ENCODE measurements at regions of chr9 and their contacts with region 1.

Region 1: DNA sequence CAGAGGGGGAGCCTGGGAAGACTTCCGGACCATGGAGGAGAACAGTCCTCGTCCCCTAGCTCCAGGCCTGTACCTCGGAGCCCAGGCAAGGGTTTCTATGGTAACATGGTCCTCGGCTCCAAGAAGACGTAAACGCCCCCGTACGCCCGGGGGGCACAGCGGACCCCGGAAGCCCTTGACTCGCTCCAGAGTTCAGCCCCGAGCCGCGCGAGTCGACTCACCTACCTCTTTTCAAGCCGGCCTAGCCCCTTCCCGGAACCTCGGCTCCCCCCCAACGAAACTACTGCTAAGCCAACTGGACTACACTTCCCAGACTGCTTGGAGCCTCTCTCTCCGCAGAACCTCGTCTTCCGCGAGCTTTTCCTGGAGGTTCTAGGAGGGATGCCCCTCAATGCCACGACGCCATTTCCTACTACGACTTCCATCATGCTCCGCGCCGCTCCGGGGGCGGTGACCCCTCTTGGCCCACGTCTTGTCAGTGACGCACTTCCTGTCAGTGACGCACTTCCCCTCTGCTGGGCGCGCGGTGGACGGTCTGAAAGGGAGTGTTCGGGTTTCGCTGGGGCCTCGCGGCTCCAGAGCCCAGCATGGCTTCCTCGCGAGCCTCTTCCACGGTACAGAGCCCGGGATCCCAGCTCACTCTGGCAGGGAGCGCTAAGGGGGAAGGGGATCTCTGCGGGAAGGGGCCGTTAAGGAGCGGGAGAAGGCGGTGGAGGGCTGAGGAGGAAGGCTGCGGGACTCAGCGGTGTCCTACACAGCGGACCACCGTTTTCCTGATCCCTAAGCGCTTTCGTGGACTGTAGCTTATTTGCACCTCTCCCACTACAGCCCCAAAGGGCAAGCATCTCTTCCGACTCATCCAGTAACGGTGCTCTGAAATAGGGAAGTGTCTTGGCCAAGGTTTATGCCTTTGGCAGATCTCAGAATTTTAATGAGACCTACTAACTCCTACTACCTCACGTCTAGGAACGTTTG is at the starts of genes CDC26 and PRPF4:
- DNase-seq: peak; percentile 81 to 98 (median 94)
- ATAC-seq: peak; percentile 94 to 96 (median 95)
- H3K4me3 ChIP-seq: peak within 1 kb of the TSS; percentile 76 to 84
- H3K4me3 Mint-ChIP-seq: no peak within 1 kb of the TSS
- H3K27ac ChIP-seq: peak within 1 kb of the TSS; percentile 89
- H3K27ac Mint-ChIP-seq: no peak within 1 kb of the TSS
- H3K4me1 ChIP-seq: peaks cover 8 to 9% of the 10 kb centered on the region in 2 experiments
- H3K4me1 Mint-ChIP-seq: peaks cover 8 to 42% (median 32%) of the 10 kb centered on the region in 3 donors
- H3K27me3 ChIP-seq: no peaks in the 10 kb centered on the region
- H3K27me3 Mint-ChIP-seq: no peaks in the 10 kb centered on the region
- total RNA-seq, gene CDC26: 25.1 to 37.0 (median 34.7) TPM
- total RNA-seq, gene PRPF4: 16.6 to 24.4 (median 21.1) TPM

Region 2: DNA sequence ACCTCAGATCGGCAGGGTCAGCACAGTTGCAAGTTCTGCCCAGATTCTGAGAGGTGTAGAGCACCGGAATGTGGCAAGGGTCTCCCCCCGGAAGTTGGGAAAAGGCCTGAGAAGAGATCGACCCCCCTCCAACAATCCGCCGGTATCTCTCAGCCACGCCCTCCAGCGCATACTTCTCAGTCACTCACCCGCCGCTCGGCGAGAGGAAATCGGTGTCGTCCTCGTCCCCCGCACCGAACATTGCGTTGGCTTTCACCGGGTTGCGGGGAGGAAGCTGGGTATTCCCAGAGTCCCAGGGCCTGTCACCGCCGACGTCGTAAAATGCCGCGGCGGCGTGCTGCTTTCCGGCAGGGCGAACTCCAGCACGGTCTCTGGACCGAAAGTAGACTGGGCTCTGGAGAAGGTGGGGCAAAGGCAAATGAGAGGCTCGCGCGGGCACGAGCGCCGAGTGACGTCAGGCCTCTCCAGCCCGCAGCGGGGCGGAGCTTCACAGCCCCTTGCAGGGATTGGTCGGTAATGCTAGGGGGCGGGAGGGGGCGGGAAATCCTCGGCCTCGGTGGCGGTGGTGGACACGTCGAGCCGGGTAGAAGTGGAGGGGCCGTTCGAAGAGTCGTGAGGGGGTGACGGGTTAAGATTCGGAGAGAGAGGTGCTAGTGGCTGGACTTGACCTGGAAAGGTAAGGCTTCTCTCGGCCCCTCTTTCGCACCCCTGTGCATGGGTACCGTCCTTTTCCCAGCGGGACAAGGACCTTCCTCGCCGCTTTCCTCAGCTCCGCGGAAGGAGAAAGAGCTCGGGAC is 54.2 kb before region 1 on chr9 and contains the starts of genes FKBP15 and SLC31A1:
- CTCF ChIA-PET with region 1: interaction called, 7 to 31 read pairs
- POLR2A ChIA-PET with region 1: interaction called, 3 to 4 read pairs
- DNase-seq: peak; percentile 87 to 99 (median 94)
- ATAC-seq: peak; percentile 98 to 100 (median 100)
- H3K4me3 ChIP-seq: peak within 1 kb of the TSS; percentile 95 to 99
- H3K4me3 Mint-ChIP-seq: peak within 1 kb of the TSS; percentile 88 to 98 (median 94)
- H3K27ac ChIP-seq: peak within 1 kb of the TSS; percentile 82
- H3K27ac Mint-ChIP-seq: peak within 1 kb of the TSS; percentile 82 to 91
- H3K4me1 ChIP-seq: peaks cover 21 to 23% of the 10 kb centered on the region in 2 experiments
- H3K4me1 Mint-ChIP-seq: peaks cover 50 to 51% (median 50%) of the 10 kb centered on the region in 3 donors
- H3K27me3 ChIP-seq: no peaks in the 10 kb centered on the region
- H3K27me3 Mint-ChIP-seq: no peaks in the 10 kb centered on the region
- total RNA-seq, gene FKBP15: 22.2 to 31.8 (median 29.5) TPM
- total RNA-seq, gene SLC31A1: 2.7 to 7.1 (median 4.2) TPM

Region 3: GRCh38 chr9:113401027-113401792 is 125.8 kb after region 1 on chr9 and contains the start of gene ALAD:
- CTCF ChIA-PET with region 1: interaction called, 4 to 15 read pairs
- POLR2A ChIA-PET with region 1: interaction called in 1 of 2 experiments, 10 read pairs
- DNase-seq: peak; percentile 97 to 100 (median 99)
- ATAC-seq: peak; percentile 98 to 100 (median 99)
- H3K4me3 ChIP-seq: peak within 1 kb of the TSS; percentile 89 to 96
- H3K4me3 Mint-ChIP-seq: peak within 1 kb of the TSS; percentile 90 to 92 (median 91)
- H3K27ac ChIP-seq: peak within 1 kb of the TSS; percentile 28
- H3K27ac Mint-ChIP-seq: peak within 1 kb of the TSS; percentile 66 to 87
- H3K4me1 ChIP-seq: peaks cover 7 to 25% of the 10 kb centered on the region in 2 experiments
- H3K4me1 Mint-ChIP-seq: peaks cover 23 to 36% (median 35%) of the 10 kb centered on the region in 3 donors
- H3K27me3 ChIP-seq: no peaks in the 10 kb centered on the region
- H3K27me3 Mint-ChIP-seq: no peaks in the 10 kb centered on the region
- total RNA-seq, gene ALAD: 23.4 to 40.8 (median 35.2) TPM

Region 4: GRCh38 chr9:113410207-113410864 is 134.9 kb after region 1 on chr9 and contains the starts of genes C9orf43 and POLE3:
- CTCF ChIA-PET with region 1: interaction called, 6 to 22 read pairs
- POLR2A ChIA-PET with region 1: no interaction called
- DNase-seq: peak; percentile 87 to 97 (median 93)
- ATAC-seq: peak; percentile 89 to 95 (median 92)
- H3K4me3 ChIP-seq: peak within 1 kb of the TSS; percentile 62 to 77
- H3K4me3 Mint-ChIP-seq: peak within 1 kb of the TSS; percentile 97 to 99 (median 99)
- H3K27ac ChIP-seq: peak within 1 kb of the TSS; percentile 93
- H3K27ac Mint-ChIP-seq: peak within 1 kb of the TSS; percentile 99 to 100
- H3K4me1 ChIP-seq: peaks cover 7 to 24% of the 10 kb centered on the region in 2 experiments
- H3K4me1 Mint-ChIP-seq: peaks cover 33 to 37% (median 35%) of the 10 kb centered on the region in 3 donors
- H3K27me3 ChIP-seq: no peaks in the 10 kb centered on the region
- H3K27me3 Mint-ChIP-seq: peaks cover 0 to 2% of the 10 kb centered on the region in 2 donors
- total RNA-seq, gene C9orf43: 0.28 to 1.1 (median 0.82) TPM
- total RNA-seq, gene POLE3: 47.2 to 59.1 (median 50.6) TPM

Region 5: DNA sequence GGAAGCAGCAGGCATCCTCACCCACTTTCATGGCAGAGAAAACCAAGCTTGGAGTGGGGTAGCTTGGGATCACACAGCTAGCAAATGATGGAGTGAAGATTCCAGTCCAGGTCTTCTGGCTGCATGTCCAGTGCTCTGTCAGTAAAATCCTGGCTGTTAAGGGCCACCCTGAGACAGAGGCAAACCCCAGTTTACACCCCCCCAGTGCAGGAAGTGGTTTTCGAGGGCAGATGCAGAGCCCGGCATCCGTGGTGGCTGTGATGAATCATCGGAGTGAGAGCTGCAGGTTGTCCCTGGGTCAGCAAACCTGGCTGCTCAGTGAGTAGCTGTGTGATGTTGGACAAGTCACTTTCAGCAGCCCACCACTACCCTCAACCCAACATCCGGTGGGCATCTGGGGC is 303.4 kb after region 1 on chr9:
- CTCF ChIA-PET with region 1: interaction called, 3 to 12 read pairs
- POLR2A ChIA-PET with region 1: no interaction called
- DNase-seq: peak; percentile 52 to 87 (median 74)
- ATAC-seq: peak; percentile 67 to 78 (median 74)
- H3K4me3 ChIP-seq: peak overlapping the region; percentile 10 to 17
- H3K4me3 Mint-ChIP-seq: peak overlapping the region; percentile 52 to 81 (median 62)
- H3K27ac ChIP-seq: peak overlapping the region; percentile 91
- H3K27ac Mint-ChIP-seq: peak overlapping the region; percentile 98 to 99
- H3K4me1 ChIP-seq: peaks cover 38 to 78% of the 10 kb centered on the region in 2 experiments
- H3K4me1 Mint-ChIP-seq: peaks cover 74 to 88% (median 78%) of the 10 kb centered on the region in 3 donors
- H3K27me3 ChIP-seq: no peaks in the 10 kb centered on the region
- H3K27me3 Mint-ChIP-seq: no peaks in the 10 kb centered on the region

Region 6: GRCh38 chr9:113657703-113658544 is 382.5 kb after region 1 on chr9:
- CTCF ChIA-PET with region 1: interaction called, 21 to 29 read pairs
- POLR2A ChIA-PET with region 1: no interaction called
- DNase-seq: peak; percentile 28 to 87 (median 69)
- ATAC-seq: peak; percentile 74 to 91 (median 84)
- H3K4me3 ChIP-seq: no peak overlapping the region
- H3K4me3 Mint-ChIP-seq: no peak overlapping the region
- H3K27ac ChIP-seq: no peak overlapping the region
- H3K27ac Mint-ChIP-seq: peak overlapping the region in 1 of 2 donors; percentile 48
- H3K4me1 ChIP-seq: peaks cover 0 to 8% of the 10 kb centered on the region in 2 experiments
- H3K4me1 Mint-ChIP-seq: peaks cover 0 to 5% (median 0%) of the 10 kb centered on the region in 3 donors
- H3K27me3 ChIP-seq: peaks cover 0 to 17% of the 10 kb centered on the region in 2 experiments
- H3K27me3 Mint-ChIP-seq: peaks cover 9 to 11% of the 10 kb centered on the region in 2 donors

Measured in T-cell (primary cell).